Head of caudate nucleus (tissue), 42 donors: ENCODE measurements at regions of chr4 and their contacts with region 1.

Region 1: GRCh38 chr4:64158648-64159326 is 250.5 kb downstream of the TECRL start:
- DNase-seq: peak in 40 of 42 donors; percentile 27 to 89 (median 69)

Region 2: GRCh38 chr4:64539234-64539849 is 380.6 kb after region 1 on chr4:
- intact Hi-C with region 1: loop called (anchors 5 kb)
- DNase-seq: peak in 38 of 42 donors; percentile 4 to 83 (median 54)